Panc1 (cell line): ENCODE measurements at regions of chr10 and their contacts with region 1.

Region 1: GRCh38 chr10:36872702-36873393 is 252.6 kb upstream of the ANKRD30A start:
- DNase-seq: no peak
- ATAC-seq: no peak
- H3K4me3 ChIP-seq: no peak overlapping the region
- H3K27ac ChIP-seq: no peak overlapping the region
- H3K4me1 ChIP-seq: no peaks in the 10 kb centered on the region
- H3K27me3 ChIP-seq: no peaks in the 10 kb centered on the region
- CTCF ChIP-seq: no peak

Region 2: GRCh38 chr10:35643151-35644044 is 1229.5 kb before region 1 on chr10:
- CTCF ChIA-PET with region 1: no interaction called
- POLR2A ChIA-PET with region 1: no interaction called
- in situ Hi-C with region 1: no loop called
- intact Hi-C with region 1: no loop called
- DNase-seq: no peak
- ATAC-seq: no peak
- H3K4me3 ChIP-seq: peak overlapping the region; percentile 52 to 60
- H3K27ac ChIP-seq: no peak overlapping the region
- H3K4me1 ChIP-seq: no peaks in the 10 kb centered on the region
- H3K27me3 ChIP-seq: peaks cover 2% of the 10 kb centered on the region; the same call in 1 of the 2 replicates
- CTCF ChIP-seq: no peak

Region 3: DNA sequence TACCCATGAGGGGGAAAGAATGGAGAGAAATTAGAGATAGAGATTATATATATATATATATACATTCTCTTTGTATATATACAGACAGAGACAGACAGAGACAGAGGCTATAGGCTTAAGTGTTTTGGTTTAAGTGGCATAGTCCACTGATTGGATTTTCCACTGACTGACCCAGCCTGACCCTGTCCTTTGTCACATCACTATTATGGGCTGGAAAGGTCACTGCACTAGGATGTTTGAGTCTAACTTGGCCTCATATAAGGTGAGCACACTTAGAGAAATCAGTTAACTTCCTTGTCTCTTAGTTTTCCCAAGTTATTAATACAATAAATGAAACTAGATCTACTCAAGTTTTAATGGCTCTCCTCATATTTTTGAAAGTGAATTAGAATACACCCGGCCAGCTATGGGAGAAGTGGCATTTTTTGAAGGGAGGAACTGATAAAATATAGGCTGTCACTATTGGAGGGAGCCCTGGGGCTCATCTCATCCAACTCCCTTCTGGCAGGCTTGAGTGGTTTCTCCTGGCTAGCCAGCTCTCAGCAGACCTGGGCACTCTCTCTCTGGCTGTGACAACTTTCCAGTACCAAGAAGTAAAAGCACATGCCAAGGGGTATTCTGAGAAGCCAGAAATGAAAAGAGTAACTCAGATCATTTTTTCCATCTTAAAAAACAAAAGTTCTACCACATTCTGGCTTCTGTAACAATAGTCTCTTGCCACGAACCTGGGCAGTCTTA is 203.1 kb before region 1 on chr10:
- CTCF ChIA-PET with region 1: no interaction called
- POLR2A ChIA-PET with region 1: no interaction called
- in situ Hi-C with region 1: no loop called
- intact Hi-C with region 1: loop called (anchors 5 kb)
- DNase-seq: no peak
- ATAC-seq: no peak
- H3K4me3 ChIP-seq: no peak overlapping the region
- H3K27ac ChIP-seq: no peak overlapping the region
- H3K4me1 ChIP-seq: no peaks in the 10 kb centered on the region
- H3K27me3 ChIP-seq: no peaks in the 10 kb centered on the region
- CTCF ChIP-seq: no peak